Activated B cell treated with CpG ODN at 0.5 μM for 24 hours (primary cell): ENCODE measurements at regions of chr16 and their contacts with region 1.

Region 1: DNA sequence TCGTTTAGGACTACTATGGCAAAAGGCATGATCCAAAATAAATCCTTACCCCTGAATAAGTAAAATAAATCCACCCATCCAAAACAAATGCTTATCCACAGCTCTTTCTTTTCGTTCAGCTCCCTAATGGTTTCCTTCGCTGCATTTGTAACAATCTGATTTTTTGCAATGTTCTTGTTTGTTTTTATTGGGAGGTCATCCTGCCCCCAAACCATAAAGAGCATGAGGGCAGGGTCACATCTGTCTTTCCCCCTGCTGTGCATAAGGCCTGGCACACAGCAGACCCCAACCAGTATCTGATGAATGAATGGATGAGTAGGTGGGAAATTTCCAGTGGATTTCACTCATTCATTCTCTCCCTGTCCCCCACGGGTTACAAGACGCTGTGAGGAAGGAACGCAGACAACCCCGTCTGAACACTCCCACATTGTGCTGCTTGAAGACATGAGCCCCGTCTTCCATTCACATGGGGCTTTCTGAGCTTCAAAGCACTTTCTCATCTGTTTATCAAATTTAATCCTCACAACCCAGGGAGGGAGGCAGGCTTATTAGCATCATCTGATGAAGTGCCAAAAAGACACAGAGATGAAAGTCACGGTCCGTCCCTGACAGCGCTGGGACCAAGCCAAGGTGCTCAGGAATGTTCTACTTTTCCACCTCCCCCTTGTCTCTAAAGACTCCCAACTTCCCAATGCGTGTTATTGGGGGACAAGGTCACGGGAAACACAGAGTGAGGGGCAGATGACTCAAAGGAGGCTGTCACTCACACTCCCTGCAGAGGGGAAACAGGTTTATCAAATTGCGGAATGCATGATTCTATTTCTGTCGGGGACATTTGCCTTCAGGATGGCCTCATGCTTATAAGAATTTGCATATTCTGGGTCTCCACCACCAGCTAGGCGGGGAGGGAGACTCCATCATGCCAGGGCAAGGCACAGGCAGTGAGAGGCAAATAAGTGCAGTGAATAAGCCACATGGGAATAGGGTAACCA is 10.9 kb downstream of the XYLT1 start:
- DNase-seq: peak; percentile 40
- ATAC-seq: peak; percentile 87
- H3K4me3 Mint-ChIP-seq: peak overlapping the region; percentile 77
- H3K27ac Mint-ChIP-seq: peak overlapping the region; percentile 65
- H3K4me1 Mint-ChIP-seq: peaks cover 55% of the 10 kb centered on the region
- H3K27me3 Mint-ChIP-seq: no peaks in the 10 kb centered on the region
- CTCF ChIP-seq: no peak

Region 2: DNA sequence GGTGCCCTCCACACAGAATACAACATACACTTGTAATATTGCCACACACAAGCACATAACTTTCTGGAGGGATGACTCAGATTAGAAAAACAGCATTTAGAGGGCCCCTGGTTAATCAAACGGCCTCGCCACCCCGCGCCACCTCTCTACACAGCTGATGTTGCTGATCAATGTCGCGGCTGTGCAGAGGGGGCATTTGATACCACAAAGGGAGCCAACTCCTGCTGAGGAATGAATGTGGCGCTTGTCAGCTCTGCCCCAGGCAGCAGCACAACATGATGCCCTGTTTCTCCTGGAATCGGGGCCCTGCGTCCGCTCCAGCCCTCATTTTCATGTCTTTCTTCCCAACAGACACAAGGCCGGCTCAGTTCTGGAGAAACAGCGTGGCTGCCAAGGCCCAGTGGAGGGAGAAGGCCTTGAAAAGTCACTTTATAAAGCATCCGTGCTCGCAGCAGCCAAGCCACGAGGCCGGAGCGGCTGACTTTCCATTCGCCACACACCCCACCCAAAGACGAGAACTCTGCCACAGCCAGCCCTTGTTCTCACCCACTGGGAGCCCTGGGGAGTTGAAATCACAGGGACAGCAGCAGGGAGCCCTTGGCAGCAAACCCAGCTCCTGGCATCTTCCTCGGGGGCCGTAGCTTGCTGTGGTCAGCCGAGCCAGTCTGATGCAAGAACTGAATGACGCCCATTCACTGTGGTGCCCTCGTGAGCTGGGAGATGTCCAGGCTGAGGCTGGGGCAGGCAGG is 54.7 kb before region 1 on chr16:
- CTCF ChIA-PET with region 1: no interaction called
- POLR2A ChIA-PET with region 1: no interaction called
- intact Hi-C with region 1: no loop called
- DNase-seq: no peak
- ATAC-seq: no peak
- H3K4me3 Mint-ChIP-seq: no peak overlapping the region
- H3K27ac Mint-ChIP-seq: no peak overlapping the region
- H3K4me1 Mint-ChIP-seq: peaks cover 44% of the 10 kb centered on the region
- H3K27me3 Mint-ChIP-seq: no peaks in the 10 kb centered on the region
- CTCF ChIP-seq: no peak

Region 3: DNA sequence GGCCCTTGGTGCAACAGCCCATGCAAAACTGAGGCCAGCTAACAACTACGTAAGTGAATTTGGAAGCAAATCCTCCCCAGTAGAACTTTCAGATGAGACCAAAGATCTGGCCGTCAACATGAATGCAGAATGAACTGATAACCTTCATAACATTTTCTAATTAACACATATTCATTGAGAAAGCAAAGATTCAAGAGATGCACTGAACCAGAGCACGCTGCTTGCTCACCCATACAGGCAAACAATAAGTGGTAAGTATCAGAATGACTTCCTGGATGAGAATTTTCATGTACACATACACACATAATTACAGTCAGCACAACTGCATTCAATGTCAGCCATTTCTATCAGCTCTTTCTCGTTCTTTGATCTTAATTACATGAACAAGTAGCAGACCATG is 19.7 kb before region 1 on chr16:
- CTCF ChIA-PET with region 1: no interaction called
- POLR2A ChIA-PET with region 1: no interaction called
- intact Hi-C with region 1: loop called (anchors 1 kb)
- DNase-seq: no peak
- ATAC-seq: peak; percentile 45
- H3K4me3 Mint-ChIP-seq: no peak overlapping the region
- H3K27ac Mint-ChIP-seq: peak overlapping the region; percentile 10
- H3K4me1 Mint-ChIP-seq: peaks cover 38% of the 10 kb centered on the region
- H3K27me3 Mint-ChIP-seq: no peaks in the 10 kb centered on the region
- CTCF ChIP-seq: no peak

Region 4: GRCh38 chr16:17448640-17449638 is 10.9 kb before region 1 on chr16:
- CTCF ChIA-PET with region 1: no interaction called
- POLR2A ChIA-PET with region 1: interaction called, 4 read pairs
- intact Hi-C with region 1: loop called (anchors 1 kb)
- DNase-seq: no peak
- ATAC-seq: peak; percentile 72
- H3K4me3 Mint-ChIP-seq: no peak overlapping the region
- H3K27ac Mint-ChIP-seq: peak overlapping the region; percentile 65
- H3K4me1 Mint-ChIP-seq: peaks cover 50% of the 10 kb centered on the region
- H3K27me3 Mint-ChIP-seq: no peaks in the 10 kb centered on the region
- CTCF ChIP-seq: no peak

Region 5: DNA sequence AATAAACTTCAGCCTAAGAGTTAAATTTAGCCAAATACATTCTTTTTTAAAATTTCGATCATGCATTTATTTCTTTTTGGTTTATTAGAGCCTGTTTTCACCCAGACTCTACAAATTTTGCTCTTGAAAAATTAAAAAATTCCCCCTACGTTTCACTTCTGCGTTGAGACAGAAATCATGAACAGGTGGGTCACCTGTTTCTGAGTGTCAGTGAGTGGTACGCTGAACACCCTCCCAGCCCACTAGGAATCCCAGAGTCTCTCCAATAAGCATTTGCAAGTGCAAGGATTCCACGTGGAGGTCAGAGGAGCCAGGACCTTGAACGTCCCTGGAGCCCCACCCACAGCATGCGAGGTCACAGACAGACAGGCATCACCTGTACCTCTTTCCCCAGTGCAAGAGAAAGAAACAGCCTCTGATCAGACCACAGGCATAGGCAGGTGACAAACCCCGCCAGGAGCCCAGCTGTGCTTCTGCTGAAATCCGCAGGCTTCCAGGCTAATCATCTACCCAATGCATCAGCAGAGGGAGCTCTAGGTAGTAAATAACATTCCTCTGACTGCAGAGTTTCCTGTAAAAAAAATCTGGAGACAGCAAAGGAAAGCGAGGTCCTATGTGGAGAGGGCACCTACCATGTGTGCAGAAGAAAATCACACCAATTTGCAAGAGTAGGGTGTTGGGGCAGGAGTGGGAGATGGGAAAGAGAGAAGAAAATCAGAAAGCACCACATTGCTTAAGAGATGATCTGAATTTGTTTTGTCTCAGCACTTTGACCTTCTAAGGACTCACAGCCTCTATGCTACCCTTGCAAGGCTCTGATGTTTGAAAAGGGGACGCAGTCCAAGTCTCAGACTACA is 16.8 kb after region 1 on chr16:
- CTCF ChIA-PET with region 1: interaction called, 5 read pairs
- POLR2A ChIA-PET with region 1: interaction called, 4 read pairs
- intact Hi-C with region 1: loop called (anchors 1 kb)
- DNase-seq: no peak
- ATAC-seq: peak; percentile 72
- H3K4me3 Mint-ChIP-seq: peak overlapping the region; percentile 47
- H3K27ac Mint-ChIP-seq: peak overlapping the region; percentile 16
- H3K4me1 Mint-ChIP-seq: peaks cover 35% of the 10 kb centered on the region
- H3K27me3 Mint-ChIP-seq: peaks cover 11% of the 10 kb centered on the region
- CTCF ChIP-seq: no peak

Region 6: GRCh38 chr16:17511340-17511739 is 51.5 kb after region 1 on chr16:
- CTCF ChIA-PET with region 1: no interaction called
- POLR2A ChIA-PET with region 1: no interaction called
- intact Hi-C with region 1: no loop called
- DNase-seq: no peak
- ATAC-seq: no peak
- H3K4me3 Mint-ChIP-seq: no peak overlapping the region
- H3K27ac Mint-ChIP-seq: no peak overlapping the region
- H3K4me1 Mint-ChIP-seq: no peaks in the 10 kb centered on the region
- H3K27me3 Mint-ChIP-seq: peaks cover 21% of the 10 kb centered on the region
- CTCF ChIP-seq: no peak